Cardiac septum (tissue), 1 donor: ENCODE measurements at regions of chr5 and their contacts with region 1.

Region 1: DNA sequence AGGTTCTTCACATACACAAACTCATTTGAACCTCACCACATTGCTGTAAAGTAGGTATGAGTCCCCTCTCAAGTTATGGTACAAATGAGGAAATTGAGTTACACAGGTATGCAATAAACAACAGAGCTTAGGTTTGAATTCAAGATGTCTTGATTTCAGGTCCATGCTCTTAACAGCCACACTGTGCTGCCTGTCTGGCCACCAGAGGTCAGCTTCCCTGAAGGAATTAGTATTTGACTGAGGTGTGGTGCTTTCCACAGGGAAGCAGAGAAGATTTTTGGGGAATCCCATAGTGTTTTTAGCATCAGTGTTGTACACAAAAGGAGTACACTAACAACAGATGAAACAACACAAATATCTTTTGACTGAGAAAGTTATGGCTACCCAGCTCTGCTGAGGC is 94.4 kb upstream of the ITGA1 start:
- DNase-seq: peak; percentile 73

Region 2: DNA sequence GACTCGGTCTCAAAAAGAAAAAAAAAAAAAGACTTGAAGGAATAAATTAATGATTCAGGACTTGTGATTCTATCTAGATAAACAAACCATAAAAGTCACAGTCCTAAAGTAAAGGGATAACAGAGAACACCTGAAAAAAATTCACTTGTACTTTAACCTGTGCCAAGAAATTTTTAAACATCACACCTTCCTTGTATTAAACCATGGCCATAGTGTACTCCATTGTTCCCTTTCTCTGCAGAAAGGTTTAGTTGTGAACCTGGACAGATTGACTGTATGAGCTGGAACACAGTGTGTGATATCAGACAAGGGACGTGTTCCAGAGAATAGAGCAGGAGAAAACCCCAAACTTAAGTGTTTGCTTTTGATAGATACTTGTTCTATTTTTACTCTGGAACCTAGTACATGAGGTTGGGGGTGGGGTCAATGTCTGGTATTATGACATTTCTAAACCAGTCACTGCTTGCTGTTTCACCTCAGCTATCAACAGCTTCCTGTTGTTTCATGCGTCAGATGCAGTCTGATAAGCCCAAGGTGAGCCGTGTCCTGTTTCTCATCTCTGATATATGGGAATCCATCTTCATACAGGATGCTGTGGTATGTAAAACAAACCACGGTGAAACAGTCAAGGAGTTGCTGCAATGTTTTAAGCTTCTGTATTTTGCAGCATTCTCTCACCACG is 31.9 kb after region 1 on chr5:
- intact Hi-C with region 1: loop called (anchors 5 kb)
- DNase-seq: no peak

Region 3: GRCh38 chr5:52778784-52779183 is 85.5 kb after region 1 on chr5:
- intact Hi-C with region 1: no loop called
- DNase-seq: no peak